Posterior vena cava (tissue), 2 donors: ENCODE measurements at regions of chr6 and their contacts with region 1.

Region 1: DNA sequence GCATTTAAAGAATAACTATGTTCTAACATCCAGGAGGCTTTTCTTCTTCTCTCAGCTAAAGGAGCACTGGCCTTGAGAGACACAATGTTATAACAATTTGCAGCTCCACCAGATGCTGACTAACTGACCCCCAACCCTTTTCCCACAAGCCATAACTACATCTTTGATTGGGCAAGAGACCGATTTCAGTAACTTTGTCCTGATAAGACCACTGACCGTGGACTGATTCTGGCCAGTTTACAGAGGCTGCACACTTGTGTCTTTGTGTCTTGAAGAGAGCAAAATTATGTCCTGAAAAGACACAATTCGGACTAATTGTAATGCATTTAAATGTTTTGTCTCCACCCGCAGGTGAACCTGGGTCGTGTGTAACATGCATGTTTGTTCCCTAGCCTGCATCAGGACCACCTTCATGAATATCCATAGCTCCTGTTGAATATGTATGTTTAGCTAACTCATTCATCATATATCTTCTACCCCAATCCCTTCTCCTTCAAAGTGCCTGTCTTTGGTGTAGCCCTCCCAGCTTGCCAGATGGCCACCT is 22.3 kb downstream of the ABRACL start:
- DNase-seq: no peak

Region 2: DNA sequence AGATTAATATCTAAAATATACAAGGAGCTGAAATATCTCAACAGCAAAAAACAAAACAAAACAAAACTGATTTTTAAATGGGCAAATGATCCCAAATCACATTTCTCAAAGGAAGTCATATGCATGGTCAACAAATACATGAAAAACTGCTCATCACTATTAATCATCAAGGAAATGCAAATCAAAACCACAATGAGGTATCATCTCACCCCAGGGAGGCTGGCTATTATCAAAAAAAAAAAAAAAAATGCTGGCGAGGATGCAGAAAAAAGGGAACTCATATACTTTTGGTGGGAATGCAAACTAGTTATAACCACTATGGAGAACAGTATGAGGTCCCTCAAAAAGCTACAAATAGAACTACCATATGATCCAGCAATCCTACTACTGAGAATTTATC is 97.4 kb before region 1 on chr6:
- intact Hi-C with region 1: no loop called
- DNase-seq: no peak

Region 3: GRCh38 chr6:139080255-139080920 is 29.5 kb after region 1 on chr6:
- intact Hi-C with region 1: loop called in 1 of 2 experiments (anchors 1 kb)
- DNase-seq: no peak